PC-3 (cell line): ENCODE measurements at regions of chr1 and their contacts with region 1.

Region 1: GRCh38 chr1:24201941-24202440 is 14.9 kb upstream of the IFNLR1 start:
- DNase-seq: peak; percentile 97
- ATAC-seq: peak; percentile 83
- H3K4me3 ChIP-seq: no peak overlapping the region
- H3K27ac ChIP-seq: peak overlapping the region; percentile 88
- H3K4me1 ChIP-seq: peaks cover 33% of the 10 kb centered on the region
- H3K27me3 ChIP-seq: no peaks in the 10 kb centered on the region
- CTCF ChIP-seq: peak; percentile 89

Region 2: GRCh38 chr1:24228311-24228710 is 26.3 kb after region 1 on chr1:
- CTCF ChIA-PET with region 1: no interaction called
- POLR2A ChIA-PET with region 1: no interaction called
- intact Hi-C with region 1: no loop called
- DNase-seq: no peak
- ATAC-seq: no peak
- H3K4me3 ChIP-seq: no peak overlapping the region
- H3K27ac ChIP-seq: no peak overlapping the region
- H3K4me1 ChIP-seq: no peaks in the 10 kb centered on the region
- H3K27me3 ChIP-seq: no peaks in the 10 kb centered on the region
- CTCF ChIP-seq: no peak

Region 3: DNA sequence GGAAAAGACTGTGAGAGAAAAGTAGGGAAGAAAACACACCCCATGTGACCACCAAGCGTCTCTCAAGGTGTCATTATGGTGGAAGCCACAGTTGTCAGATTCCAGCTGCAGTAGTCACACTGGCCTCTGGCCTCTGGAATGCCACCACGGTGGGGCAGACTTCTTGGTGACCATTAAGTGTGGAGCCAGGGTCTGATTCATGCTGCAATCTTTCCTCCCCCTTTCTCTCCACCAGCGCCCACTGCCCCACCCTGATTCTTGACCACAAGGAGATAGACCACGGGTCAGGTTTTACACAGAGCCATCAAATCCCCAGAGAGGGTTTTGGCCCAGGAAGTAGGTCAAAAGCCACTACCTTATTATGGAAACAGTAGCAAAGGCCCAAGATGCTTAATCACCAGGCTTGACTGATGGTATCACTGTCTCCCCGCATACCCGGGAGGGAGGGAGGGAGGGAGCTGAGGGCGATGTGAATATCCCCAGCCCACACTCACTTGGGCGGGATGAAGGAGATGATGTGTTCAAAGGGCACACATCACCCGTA is 64.5 kb after region 1 on chr1:
- CTCF ChIA-PET with region 1: interaction called, 9 read pairs
- POLR2A ChIA-PET with region 1: no interaction called
- intact Hi-C with region 1: loop called (anchors 1 kb)
- DNase-seq: peak; percentile 99
- ATAC-seq: peak; percentile 91
- H3K4me3 ChIP-seq: no peak overlapping the region
- H3K27ac ChIP-seq: peak overlapping the region; percentile 84
- H3K4me1 ChIP-seq: peaks cover 20% of the 10 kb centered on the region
- H3K27me3 ChIP-seq: no peaks in the 10 kb centered on the region
- CTCF ChIP-seq: peak; percentile 50

Region 4: DNA sequence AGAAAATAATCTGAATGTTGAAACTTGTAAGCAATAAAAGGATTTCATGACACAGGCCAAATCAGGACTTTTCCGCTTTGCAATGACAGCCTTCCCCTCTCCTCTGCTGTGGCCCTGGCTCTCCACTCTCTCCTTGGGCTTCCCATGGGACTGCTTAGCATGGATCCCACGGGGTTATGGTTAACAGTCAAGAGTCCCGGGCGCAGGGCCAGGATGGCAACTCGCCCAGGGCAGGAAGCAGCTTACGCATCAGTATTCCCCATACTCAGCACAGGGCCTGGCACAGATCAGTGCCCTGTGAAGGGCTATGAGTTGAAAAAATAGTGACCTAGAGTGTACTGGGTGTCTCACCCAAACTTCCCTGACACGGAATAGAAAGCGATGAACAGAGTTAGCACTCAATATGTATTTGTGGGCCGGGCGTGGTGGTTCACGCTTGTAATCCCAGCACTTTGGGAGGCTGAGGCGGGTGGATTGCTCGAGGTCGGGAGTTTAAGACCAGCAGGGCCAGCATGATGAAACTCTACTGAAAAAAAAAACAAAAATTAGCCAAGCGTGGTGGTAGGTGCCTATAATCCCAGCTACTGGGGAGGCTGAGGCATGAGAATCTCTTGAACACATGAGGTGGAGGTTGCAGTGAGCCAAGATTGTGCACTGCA is 88.1 kb after region 1 on chr1:
- CTCF ChIA-PET with region 1: interaction called, 11 read pairs
- POLR2A ChIA-PET with region 1: interaction called, 6 read pairs
- intact Hi-C with region 1: loop called (anchors 1 kb)
- DNase-seq: peak; percentile 95
- ATAC-seq: peak; percentile 57
- H3K4me3 ChIP-seq: no peak overlapping the region
- H3K27ac ChIP-seq: peak overlapping the region; percentile 76
- H3K4me1 ChIP-seq: peaks cover 62% of the 10 kb centered on the region
- H3K27me3 ChIP-seq: no peaks in the 10 kb centered on the region
- CTCF ChIP-seq: no peak

Region 5: DNA sequence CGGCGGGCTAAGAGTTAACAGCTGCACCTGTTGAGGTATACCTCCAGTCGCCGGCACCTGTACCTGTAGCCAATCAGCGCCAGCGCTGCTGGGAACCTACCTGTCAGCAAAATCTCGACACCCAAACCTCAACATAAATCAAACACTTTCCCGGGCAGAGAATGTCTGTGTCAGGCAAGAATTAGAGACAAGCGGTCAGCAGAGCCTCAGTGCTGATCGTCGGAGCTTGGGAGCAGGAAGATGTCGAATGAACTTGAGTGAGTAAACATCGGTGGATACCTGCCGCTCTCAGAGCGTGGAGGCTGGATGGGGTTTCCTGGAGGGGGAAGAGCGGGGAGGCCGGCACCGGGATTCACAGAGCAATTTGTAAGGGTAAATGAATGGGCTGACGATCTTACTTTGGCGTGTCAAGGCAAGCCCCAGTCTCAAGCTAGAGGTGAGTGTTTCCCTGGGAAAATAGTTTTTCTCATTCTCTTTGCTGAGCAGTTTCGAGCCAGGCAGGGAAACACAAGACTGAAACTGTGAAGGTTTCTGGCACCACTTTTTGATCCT is 117.4 kb after region 1 on chr1 and contains the start of gene GRHL3:
- CTCF ChIA-PET with region 1: interaction called, 10 read pairs
- POLR2A ChIA-PET with region 1: no interaction called
- intact Hi-C with region 1: no loop called
- DNase-seq: peak; percentile 75
- ATAC-seq: peak; percentile 57
- H3K4me3 ChIP-seq: peak within 1 kb of the TSS; percentile 61
- H3K27ac ChIP-seq: peak within 1 kb of the TSS; percentile 55
- H3K4me1 ChIP-seq: peaks cover 72% of the 10 kb centered on the region
- H3K27me3 ChIP-seq: no peaks in the 10 kb centered on the region
- CTCF ChIP-seq: no peak
- total RNA-seq, gene GRHL3: 3.5 and 7.8 TPM in 2 replicates

Region 6: GRCh38 chr1:24384251-24385090 is 182.5 kb after region 1 on chr1:
- CTCF ChIA-PET with region 1: interaction called, 14 read pairs
- POLR2A ChIA-PET with region 1: interaction called, 4 read pairs
- intact Hi-C with region 1: no loop called
- DNase-seq: peak; percentile 49
- ATAC-seq: peak; percentile 75
- H3K4me3 ChIP-seq: no peak overlapping the region
- H3K27ac ChIP-seq: peak overlapping the region; percentile 59
- H3K4me1 ChIP-seq: peaks cover 33% of the 10 kb centered on the region
- H3K27me3 ChIP-seq: no peaks in the 10 kb centered on the region
- CTCF ChIP-seq: no peak

Region 7: GRCh38 chr1:24635195-24635843 is 433.3 kb after region 1 on chr1:
- CTCF ChIA-PET with region 1: no interaction called
- POLR2A ChIA-PET with region 1: no interaction called
- intact Hi-C with region 1: loop called (anchors 2 kb)
- DNase-seq: peak; percentile 85
- ATAC-seq: peak; percentile 82
- H3K4me3 ChIP-seq: no peak overlapping the region
- H3K27ac ChIP-seq: no peak overlapping the region
- H3K4me1 ChIP-seq: peaks cover 11% of the 10 kb centered on the region; the same call in 1 of the 2 replicates
- H3K27me3 ChIP-seq: no peaks in the 10 kb centered on the region
- CTCF ChIP-seq: peak; percentile 88